Mammary epithelial cell (primary cell): ENCODE measurements at regions of chr11 and their contacts with region 1.

Region 1: GRCh38 chr11:111460856-111461255 is 51.3 kb downstream of the BTG4 start:
- DNase-seq: no peak
- H3K4me3 ChIP-seq: no peak overlapping the region
- H3K27ac ChIP-seq: no peak overlapping the region
- H3K4me1 ChIP-seq: peaks cover 9% of the 10 kb centered on the region
- H3K27me3 ChIP-seq: no peaks in the 10 kb centered on the region
- CTCF ChIP-seq: no peak

Region 2: GRCh38 chr11:111574373-111575225 is 113.7 kb after region 1 on chr11:
- CTCF ChIA-PET with region 1: no interaction called
- dilution Hi-C with region 1: no loop called
- in situ Hi-C with region 1: loop called (anchors 5 to 10 kb)
- intact Hi-C with region 1: no loop called
- DNase-seq: no peak
- H3K4me3 ChIP-seq: no peak overlapping the region
- H3K27ac ChIP-seq: no peak overlapping the region
- H3K4me1 ChIP-seq: no peaks in the 10 kb centered on the region
- H3K27me3 ChIP-seq: no peaks in the 10 kb centered on the region
- CTCF ChIP-seq: no peak

Region 3: DNA sequence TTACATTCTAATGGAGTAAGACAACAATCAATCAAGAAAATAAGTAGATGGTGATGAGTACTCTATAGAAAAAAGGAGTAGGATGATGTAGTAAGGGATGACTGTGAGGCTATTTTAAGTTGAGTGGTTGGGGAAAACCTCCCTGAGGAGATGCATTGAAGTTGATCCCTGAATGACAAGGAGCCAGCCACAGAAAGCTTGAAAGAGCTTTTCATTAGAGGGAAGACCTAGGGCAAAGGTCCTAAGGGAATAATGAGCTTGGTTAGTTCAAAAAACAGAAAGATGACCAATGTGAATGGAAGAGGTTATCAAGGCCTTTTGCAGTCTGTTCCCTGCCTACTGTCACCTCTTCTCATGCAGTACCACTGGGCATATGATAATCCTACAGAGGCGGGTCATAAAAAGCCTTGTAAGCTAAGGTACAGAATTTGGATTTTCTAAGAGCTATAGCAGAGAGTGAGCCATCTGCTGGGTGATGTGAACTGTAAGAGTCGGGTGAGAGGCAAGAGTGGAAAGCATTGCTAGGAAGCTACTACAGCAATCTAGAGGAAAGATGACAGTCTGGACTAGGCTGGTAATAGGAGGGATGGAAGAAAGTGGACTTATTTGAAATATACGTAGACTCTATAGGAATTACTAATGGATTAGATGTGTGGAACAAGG is 302.3 kb after region 1 on chr11:
- CTCF ChIA-PET with region 1: no interaction called
- dilution Hi-C with region 1: no loop called
- in situ Hi-C with region 1: no loop called
- intact Hi-C with region 1: no loop called
- DNase-seq: no peak
- H3K4me3 ChIP-seq: no peak overlapping the region
- H3K27ac ChIP-seq: no peak overlapping the region
- H3K4me1 ChIP-seq: peaks cover 14% of the 10 kb centered on the region
- H3K27me3 ChIP-seq: no peaks in the 10 kb centered on the region
- CTCF ChIP-seq: no peak